HCT116 (cell line): ENCODE measurements at regions of chr3 and their contacts with region 1.

Region 1: DNA sequence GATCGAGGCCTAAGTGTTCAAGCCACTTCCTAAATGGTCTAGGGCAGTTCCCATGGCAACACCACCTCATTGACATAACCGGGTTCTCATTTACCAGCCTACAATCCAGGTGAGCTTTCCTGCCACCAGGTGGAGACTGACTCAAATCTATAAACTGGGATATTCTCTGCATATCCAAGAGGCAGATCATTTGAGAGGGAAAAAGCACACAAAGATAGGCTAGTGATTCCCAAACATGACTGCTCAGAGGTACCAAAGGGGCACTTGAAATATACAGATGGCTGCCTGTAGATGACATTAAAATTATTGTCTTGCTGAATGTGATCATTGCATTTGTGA is 141.3 kb upstream of the PROK2 start:
- DNase-seq: peak; percentile 65
- ATAC-seq: peak; percentile 90
- H3K4me3 ChIP-seq: no peak overlapping the region
- H3K27ac ChIP-seq: no peak overlapping the region
- H3K4me1 ChIP-seq: 0 out of 4 replicates have a peak, but pooled peaks cover 0 to 3% of the 10 kb centered on the region in 2 experiments
- H3K27me3 ChIP-seq: no peaks in the 10 kb centered on the region
- CTCF ChIP-seq: peak; percentile 62 to 85 (median 77)
- POLR2A ChIP-seq: no peak
- RAD21 ChIP-seq: peak; percentile 83

Region 2: DNA sequence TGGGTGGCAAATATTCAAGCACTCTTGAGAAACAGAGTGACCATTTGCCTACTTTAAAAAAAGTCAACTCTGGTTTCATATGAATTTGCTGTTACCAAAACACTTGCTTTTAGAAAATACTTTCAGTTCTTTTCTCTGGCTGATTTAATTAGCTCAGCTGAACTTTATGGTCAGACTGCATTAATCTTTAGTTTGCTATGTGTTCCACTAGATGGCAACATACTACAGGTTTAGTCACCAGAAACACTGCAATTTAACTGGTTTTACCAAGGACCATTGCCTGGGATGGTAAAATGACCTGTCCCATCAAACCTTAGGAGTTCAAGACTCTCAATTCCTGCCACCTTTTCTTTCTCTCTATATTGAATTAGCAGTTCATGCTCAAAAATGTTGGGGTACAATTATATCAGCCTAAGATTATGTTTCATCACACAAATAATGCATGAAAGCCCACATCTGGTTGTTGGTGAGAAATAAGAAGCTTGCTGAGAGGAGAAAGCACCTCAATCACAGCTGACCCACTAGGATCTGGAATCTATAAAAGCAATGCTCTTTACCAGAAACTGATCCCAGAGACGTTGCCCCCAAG is 215.2 kb before region 1 on chr3:
- CTCF ChIA-PET with region 1: interaction called, 4 read pairs
- POLR2A ChIA-PET with region 1: no interaction called
- RAD21 ChIA-PET with region 1: no interaction called
- intact Hi-C with region 1: loop called (anchors 10 kb)
- DNase-seq: peak; percentile 21
- ATAC-seq: peak; percentile 80
- H3K4me3 ChIP-seq: no peak overlapping the region
- H3K27ac ChIP-seq: no peak overlapping the region
- H3K4me1 ChIP-seq: no peaks in the 10 kb centered on the region
- H3K27me3 ChIP-seq: no peaks in the 10 kb centered on the region
- CTCF ChIP-seq: peak; percentile 47 to 70 (median 48); a peak in 5 of 6 replicates
- POLR2A ChIP-seq: no peak
- RAD21 ChIP-seq: peak; percentile 78

Region 3: DNA sequence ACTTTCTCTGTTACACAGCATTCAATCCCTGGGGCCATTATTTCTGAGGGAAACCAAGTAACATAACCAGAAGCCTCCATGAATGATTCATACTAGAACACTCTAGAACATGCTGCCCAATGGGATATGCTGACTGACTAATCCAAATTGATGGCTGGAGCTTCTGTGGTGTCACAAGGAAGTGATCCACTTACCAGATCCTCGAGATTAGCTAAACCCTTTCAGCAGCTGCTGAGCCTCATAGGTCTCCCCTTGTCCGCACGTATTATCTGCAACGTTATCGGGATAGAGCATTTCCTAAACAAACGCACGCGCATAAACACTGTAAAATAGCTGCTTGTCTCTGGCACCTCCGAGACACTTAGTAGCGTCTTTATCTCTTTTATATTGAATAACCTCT is 80.0 kb before region 1 on chr3:
- CTCF ChIA-PET with region 1: no interaction called
- POLR2A ChIA-PET with region 1: no interaction called
- RAD21 ChIA-PET with region 1: no interaction called
- intact Hi-C with region 1: no loop called
- DNase-seq: no peak
- ATAC-seq: no peak
- H3K4me3 ChIP-seq: no peak overlapping the region
- H3K27ac ChIP-seq: no peak overlapping the region
- H3K4me1 ChIP-seq: no peaks in the 10 kb centered on the region
- H3K27me3 ChIP-seq: peaks cover 4% of the 10 kb centered on the region; the same call in 1 of the 2 replicates
- CTCF ChIP-seq: no peak
- POLR2A ChIP-seq: no peak
- RAD21 ChIP-seq: no peak